Activated CD4-positive, alpha-beta T cell treated with anti-CD3 and anti-CD28 coated beads for 36 hours (primary cell): ENCODE measurements at regions of chr22 and their contacts with region 1.

Region 1: GRCh38 chr22:28907311-28908008 is 24.1 kb downstream of the ZNRF3 start:
- DNase-seq: peak; percentile 87
- ATAC-seq: peak; percentile 92
- H3K4me3 Mint-ChIP-seq: no peak overlapping the region
- H3K27ac Mint-ChIP-seq: peak overlapping the region; percentile 86
- H3K4me1 Mint-ChIP-seq: peaks cover 44% of the 10 kb centered on the region
- H3K27me3 Mint-ChIP-seq: peaks cover 36% of the 10 kb centered on the region

Region 2: DNA sequence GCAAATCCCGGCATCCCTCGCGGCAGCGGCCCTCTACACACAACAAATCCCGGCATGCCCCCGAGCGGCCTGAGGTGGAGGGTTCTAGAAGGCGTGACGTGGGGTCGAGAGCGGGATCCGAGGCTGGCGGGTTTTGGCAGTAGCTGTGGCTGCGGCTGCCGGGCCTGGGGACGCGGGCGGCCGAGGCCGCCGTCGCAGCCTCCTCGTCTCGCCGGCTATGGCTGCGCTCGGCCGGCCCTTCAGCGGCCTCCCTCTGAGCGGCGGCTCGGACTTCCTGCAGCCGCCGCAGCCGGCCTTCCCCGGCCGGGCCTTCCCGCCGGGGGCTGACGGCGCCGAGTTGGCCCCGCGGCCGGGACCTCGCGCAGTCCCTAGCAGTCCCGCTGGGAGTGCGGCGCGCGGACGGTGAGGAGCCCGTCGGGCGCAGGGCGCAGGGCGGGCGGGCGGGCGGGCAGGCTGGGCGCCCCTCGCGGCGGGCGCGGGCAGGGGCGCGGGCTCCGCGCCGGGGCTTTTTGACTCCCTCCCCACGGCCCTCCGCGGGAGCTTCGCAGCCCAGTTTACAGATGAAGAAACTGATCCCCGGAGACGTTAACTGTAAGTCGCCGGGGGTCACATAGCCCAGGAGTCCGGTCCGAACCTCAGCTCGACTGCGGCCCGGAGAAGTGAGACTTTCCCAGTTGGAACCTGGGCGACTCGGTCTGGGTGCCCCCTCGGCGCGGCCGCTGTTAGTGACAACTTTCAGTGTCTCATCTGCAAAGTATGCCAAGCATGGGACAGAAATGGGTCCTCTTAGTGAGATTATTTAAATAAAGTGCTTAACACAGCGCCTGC is 134.6 kb before region 1 on chr22 and contains the start of gene CCDC117:
- CTCF ChIA-PET with region 1: no interaction called
- POLR2A ChIA-PET with region 1: no interaction called
- intact Hi-C with region 1: loop called (anchors 1 to 5 kb)
- DNase-seq: peak; percentile 96
- ATAC-seq: peak; percentile 91
- H3K4me3 Mint-ChIP-seq: peak within 1 kb of the TSS; percentile 94
- H3K27ac Mint-ChIP-seq: peak within 1 kb of the TSS; percentile 99
- H3K4me1 Mint-ChIP-seq: peaks cover 19% of the 10 kb centered on the region
- H3K27me3 Mint-ChIP-seq: no peaks in the 10 kb centered on the region
- total RNA-seq, gene CCDC117: 36.1 to 36.8 TPM

Region 3: GRCh38 chr22:28800308-28801077 is 107.0 kb before region 1 on chr22 and contains the start of gene XBP1:
- CTCF ChIA-PET with region 1: no interaction called
- POLR2A ChIA-PET with region 1: no interaction called
- intact Hi-C with region 1: loop called (anchors 1 to 10 kb)
- DNase-seq: peak; percentile 93
- ATAC-seq: peak; percentile 85
- H3K4me3 Mint-ChIP-seq: peak within 1 kb of the TSS; percentile 84
- H3K27ac Mint-ChIP-seq: peak within 1 kb of the TSS; percentile 99
- H3K4me1 Mint-ChIP-seq: peaks cover 44% of the 10 kb centered on the region
- H3K27me3 Mint-ChIP-seq: no peaks in the 10 kb centered on the region
- total RNA-seq, gene XBP1: 88.8 to 101 TPM

Region 4: DNA sequence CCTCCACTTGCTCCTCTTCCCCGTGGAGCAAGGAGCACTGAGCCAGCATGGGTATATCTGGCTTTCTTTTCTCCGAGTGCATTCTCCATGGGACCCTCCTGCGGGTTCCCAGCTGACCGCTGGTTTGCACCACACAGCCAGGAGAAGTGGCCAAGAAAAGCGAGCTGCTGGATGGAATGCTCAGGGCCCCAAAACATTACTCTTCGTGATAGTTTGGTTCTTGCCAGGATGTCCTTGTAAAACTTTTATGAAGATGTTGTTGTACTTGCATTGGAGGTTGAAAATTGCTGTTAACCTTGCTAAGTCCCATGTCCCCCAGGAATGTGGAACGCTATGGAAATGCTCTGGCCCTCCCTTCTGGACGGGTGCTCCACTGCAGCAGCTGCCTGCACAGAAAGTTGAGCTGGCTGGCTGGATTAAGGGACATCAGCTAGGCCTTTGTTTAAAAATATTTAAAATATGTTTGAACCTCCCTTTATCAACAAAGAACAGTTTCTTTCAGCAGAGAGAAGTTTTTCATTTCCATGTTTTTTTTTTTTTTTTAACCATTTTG is 44.6 kb after region 1 on chr22:
- CTCF ChIA-PET with region 1: no interaction called
- POLR2A ChIA-PET with region 1: no interaction called
- intact Hi-C with region 1: loop called (anchors 1 kb)
- DNase-seq: no peak
- ATAC-seq: no peak
- H3K4me3 Mint-ChIP-seq: no peak overlapping the region
- H3K27ac Mint-ChIP-seq: no peak overlapping the region
- H3K4me1 Mint-ChIP-seq: peaks cover 18% of the 10 kb centered on the region
- H3K27me3 Mint-ChIP-seq: peaks cover 71% of the 10 kb centered on the region

Region 5: DNA sequence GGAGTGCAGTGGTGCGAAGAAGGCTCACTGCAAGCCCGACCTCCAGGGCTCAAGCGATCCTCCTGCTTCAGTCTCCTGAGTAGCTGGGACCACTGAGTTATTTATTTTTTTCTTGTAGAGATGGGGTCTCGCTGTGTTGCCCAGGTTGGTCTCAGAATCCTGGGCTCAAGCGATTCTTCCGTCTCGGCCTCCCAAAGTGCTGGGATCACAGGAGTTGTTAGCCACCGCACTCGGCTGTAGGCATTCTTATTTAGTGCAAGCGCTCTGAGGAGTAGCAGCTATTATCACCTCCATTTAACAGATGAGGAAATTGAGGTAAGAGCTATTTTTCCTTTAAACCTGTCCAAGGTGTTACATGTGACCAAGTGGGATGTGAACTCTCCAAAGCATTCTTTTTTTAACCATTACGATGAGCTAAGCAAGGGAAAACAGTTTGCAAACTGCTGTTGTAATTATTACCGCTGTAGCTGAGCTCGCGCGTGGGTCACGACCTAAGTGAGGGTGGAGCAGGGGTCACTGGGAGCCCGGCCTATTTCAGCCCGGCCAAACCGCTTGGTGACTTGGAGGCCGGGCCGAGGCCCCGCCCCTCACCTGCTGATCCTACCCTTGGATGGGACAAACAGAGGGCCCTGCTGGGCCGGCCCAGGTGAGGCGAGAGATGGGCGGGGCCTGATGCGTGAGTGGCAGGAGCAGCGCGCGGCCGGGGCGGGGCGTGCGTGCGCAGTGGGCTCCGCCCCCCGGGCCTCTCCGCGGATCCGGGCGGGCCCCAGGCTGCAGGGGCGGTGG is 164.9 kb after region 1 on chr22:
- CTCF ChIA-PET with region 1: interaction called, 3 read pairs
- POLR2A ChIA-PET with region 1: no interaction called
- intact Hi-C with region 1: loop called in 1 of 2 experiments (anchors 1 kb)
- DNase-seq: peak; percentile 93
- ATAC-seq: peak; percentile 98
- H3K4me3 Mint-ChIP-seq: peak overlapping the region; percentile 66
- H3K27ac Mint-ChIP-seq: no peak overlapping the region
- H3K4me1 Mint-ChIP-seq: peaks cover 15% of the 10 kb centered on the region
- H3K27me3 Mint-ChIP-seq: peaks cover 51% of the 10 kb centered on the region

Region 6: GRCh38 chr22:29202212-29203192 is 295.0 kb after region 1 on chr22:
- CTCF ChIA-PET with region 1: no interaction called
- POLR2A ChIA-PET with region 1: no interaction called
- intact Hi-C with region 1: loop called in 1 of 2 experiments (anchors 1 kb)
- DNase-seq: peak; percentile 80
- ATAC-seq: peak; percentile 74
- H3K4me3 Mint-ChIP-seq: no peak overlapping the region
- H3K27ac Mint-ChIP-seq: peak overlapping the region; percentile 19
- H3K4me1 Mint-ChIP-seq: peaks cover 16% of the 10 kb centered on the region
- H3K27me3 Mint-ChIP-seq: peaks cover 34% of the 10 kb centered on the region

Region 7: GRCh38 chr22:29457730-29458129 is 550.3 kb after region 1 on chr22:
- CTCF ChIA-PET with region 1: no interaction called
- POLR2A ChIA-PET with region 1: no interaction called
- intact Hi-C with region 1: no loop called
- DNase-seq: peak; percentile 47
- ATAC-seq: peak; percentile 73
- H3K4me3 Mint-ChIP-seq: no peak overlapping the region
- H3K27ac Mint-ChIP-seq: no peak overlapping the region
- H3K4me1 Mint-ChIP-seq: no peaks in the 10 kb centered on the region
- H3K27me3 Mint-ChIP-seq: no peaks in the 10 kb centered on the region